ENCODE measurements at regions of chrX and their contacts with region 1.

Region 1: DNA sequence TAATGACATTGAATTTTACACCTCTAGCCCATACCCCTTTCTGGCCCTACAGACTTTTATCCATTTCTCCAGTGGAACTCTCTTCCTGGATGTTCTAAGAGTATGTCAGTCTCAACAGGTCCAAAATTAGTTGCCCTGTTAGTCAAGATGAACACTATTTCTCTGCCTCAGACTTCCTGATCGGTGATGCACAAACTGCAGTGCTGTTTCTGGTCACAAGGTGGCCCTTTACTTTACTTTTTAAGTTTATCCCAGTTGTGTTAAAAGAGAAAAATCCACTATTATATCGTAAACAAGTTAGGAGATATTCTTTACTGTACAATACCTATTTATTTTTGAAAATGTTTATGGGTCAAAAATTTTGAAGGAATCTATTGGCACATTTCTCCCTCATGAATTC is 13.1 kb downstream of the TCEAL7 start:
- DNase-seq: peak in 1 of 2 donors; percentile 35
- ATAC-seq: no peak
- H3K4me3 ChIP-seq: no peak overlapping the region
- H3K27ac ChIP-seq: no peak overlapping the region
- H3K4me1 ChIP-seq: no peaks in the 10 kb centered on the region
- H3K27me3 ChIP-seq: peaks cover 0 to 44% (median 0%) of the 10 kb centered on the region in 7 donors
- CTCF ChIP-seq: peak; percentile 47 to 77 (median 69)

Region 2: GRCh38 chrX:103404231-103405208 is 61.4 kb after region 1 on chrX:
- intact Hi-C with region 1: loop called in 1 of 10 experiments (anchors 10 kb)
- DNase-seq: peak; percentile 18 to 74
- ATAC-seq: peak; percentile 43 to 92 (median 86)
- H3K4me3 ChIP-seq: peak overlapping the region in 9 of 10 donors; percentile 27 to 59 (median 54)
- H3K27ac ChIP-seq: peak overlapping the region in 2 of 10 donors; percentile 43 to 56
- H3K4me1 ChIP-seq: peaks cover 0 to 5% (median 0%) of the 10 kb centered on the region in 9 donors
- H3K27me3 ChIP-seq: peaks cover 0 to 18% (median 0%) of the 10 kb centered on the region in 7 donors
- CTCF ChIP-seq: no peak

Region 3: DNA sequence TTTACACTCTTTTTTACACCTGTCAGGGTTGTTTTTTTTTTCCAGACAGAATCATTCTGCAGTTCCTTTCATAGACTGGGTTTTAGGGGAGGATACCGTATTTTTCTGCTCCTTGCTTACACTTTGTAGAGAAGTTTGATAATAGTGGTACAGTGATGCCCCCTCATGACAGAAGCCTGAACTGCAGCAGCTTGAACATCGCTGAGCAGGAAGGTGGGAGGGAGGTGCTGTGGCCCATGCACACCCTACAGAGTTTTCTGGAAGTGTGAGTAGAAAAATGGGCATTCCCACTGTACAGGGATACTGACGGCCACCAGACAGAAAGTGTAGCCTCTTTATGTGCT is 121.6 kb after region 1 on chrX:
- intact Hi-C with region 1: loop called (anchors 1 to 10 kb)
- DNase-seq: peak; percentile 39 to 73
- ATAC-seq: peak; percentile 73 to 96 (median 90)
- H3K4me3 ChIP-seq: peak overlapping the region in 9 of 10 donors; percentile 11 to 47 (median 38)
- H3K27ac ChIP-seq: no peak overlapping the region
- H3K4me1 ChIP-seq: no peaks in the 10 kb centered on the region
- H3K27me3 ChIP-seq: peaks cover 0 to 26% (median 0%) of the 10 kb centered on the region in 7 donors
- CTCF ChIP-seq: peak; percentile 45 to 78 (median 72)

Measured in heart right ventricle (tissue), 16 donors.